CD4-positive, alpha-beta T cell (primary cell): ENCODE measurements at regions of chr18 and their contacts with region 1.

Region 1: DNA sequence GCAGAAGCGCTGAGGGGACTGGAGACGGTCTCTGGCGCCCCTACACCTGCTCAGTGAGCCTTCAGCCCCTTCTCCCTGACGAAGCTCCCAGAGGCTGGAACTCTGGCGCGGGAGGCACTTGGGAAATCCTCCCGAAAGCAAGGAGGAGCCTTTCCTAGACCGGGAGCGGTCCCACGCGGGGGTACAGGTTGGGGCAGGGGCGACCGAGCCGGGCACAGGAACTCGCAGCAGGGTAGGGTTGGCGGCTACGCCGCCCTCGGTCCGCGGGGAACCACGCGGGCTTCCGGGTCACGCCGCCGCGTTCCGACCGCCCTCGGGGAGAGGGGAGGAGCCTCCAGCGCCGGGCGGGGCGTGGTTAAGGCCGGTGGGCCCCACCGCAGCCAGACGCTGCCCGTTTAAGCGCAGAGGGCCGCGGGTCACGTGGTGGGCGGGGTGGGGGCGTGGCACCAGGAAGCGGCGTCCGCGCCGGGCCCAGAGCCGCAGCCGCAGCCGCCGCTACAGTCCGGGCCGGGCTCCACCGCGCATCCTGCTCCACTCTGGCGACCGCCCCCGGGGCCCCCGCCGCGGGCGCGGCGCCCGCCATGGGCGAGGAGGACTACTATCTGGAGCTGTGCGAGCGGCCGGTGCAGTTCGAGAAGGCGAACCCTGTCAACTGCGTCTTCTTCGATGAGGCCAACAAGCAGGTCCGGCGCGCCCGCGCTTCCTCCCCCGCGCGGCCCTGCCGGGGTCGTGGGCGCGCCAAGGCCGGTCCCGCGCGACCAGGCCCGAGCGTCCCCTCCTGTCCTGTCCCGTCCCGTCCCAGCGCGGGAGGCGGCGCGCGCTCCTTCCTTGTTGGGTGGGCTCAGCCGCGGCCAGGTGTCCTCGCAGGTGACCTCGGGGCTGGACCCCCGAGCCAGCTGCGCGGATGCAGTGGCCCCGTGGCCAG is at the start of gene RMC1:
- DNase-seq: peak; percentile 92 to 99 (median 97)
- ATAC-seq: peak; percentile 89
- H3K4me3 ChIP-seq: peak within 1 kb of the TSS; percentile 76
- H3K4me3 Mint-ChIP-seq: peak within 1 kb of the TSS; percentile 91
- H3K27ac ChIP-seq: peak within 1 kb of the TSS; percentile 86 to 89
- H3K27ac Mint-ChIP-seq: peak within 1 kb of the TSS; percentile 91
- H3K4me1 ChIP-seq: peaks cover 45% of the 10 kb centered on the region
- H3K4me1 Mint-ChIP-seq: peaks cover 51% of the 10 kb centered on the region
- H3K27me3 ChIP-seq: no peaks in the 10 kb centered on the region
- H3K27me3 Mint-ChIP-seq: no peaks in the 10 kb centered on the region
- CTCF ChIP-seq: no peak
- total RNA-seq, gene RMC1: 46.9 to 48.3 TPM

Region 2: DNA sequence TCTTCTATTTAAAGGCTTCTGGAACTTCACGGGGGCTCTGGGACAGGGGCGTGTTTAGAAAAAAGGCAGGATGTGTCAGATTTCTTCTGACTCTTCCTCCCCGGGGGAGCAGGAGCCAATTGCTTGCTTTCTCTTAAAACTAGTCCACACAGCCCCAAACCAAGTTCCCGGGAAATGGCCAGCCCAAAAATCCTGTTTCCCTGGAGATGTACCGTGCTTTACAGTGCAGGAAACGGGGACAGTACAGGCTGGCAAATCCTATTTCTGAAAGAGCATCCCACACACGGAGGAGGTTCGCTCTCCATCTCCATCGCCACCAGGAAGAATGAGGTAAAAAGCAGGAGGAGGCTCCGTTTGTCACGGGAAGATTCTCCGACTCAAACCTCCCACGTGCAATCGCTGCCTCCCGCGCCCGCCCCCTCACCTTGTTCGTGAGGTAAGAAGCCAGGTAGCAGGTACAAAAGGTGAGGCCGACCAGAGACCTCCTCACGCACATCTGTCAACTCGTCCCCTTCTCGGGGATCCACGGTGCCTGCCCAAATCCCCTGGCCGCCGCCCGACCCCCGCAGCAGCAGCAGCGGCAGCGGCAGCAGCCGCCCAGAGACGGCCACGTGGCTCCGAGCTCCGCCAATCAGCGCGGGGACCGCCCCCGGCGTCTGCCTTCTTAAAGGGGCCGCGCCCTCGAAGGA is 65.8 kb before region 1 on chr18:
- CTCF ChIA-PET with region 1: no interaction called
- POLR2A ChIA-PET with region 1: no interaction called
- intact Hi-C with region 1: loop called in 1 of 2 experiments (anchors 1 kb)
- DNase-seq: peak; percentile 45 to 81 (median 68)
- ATAC-seq: peak; percentile 98
- H3K4me3 ChIP-seq: peak overlapping the region; percentile 77
- H3K4me3 Mint-ChIP-seq: peak overlapping the region; percentile 89
- H3K27ac ChIP-seq: no peak overlapping the region
- H3K27ac Mint-ChIP-seq: peak overlapping the region; percentile 36
- H3K4me1 ChIP-seq: peaks cover 17% of the 10 kb centered on the region
- H3K4me1 Mint-ChIP-seq: peaks cover 14% of the 10 kb centered on the region
- H3K27me3 ChIP-seq: no peaks in the 10 kb centered on the region
- H3K27me3 Mint-ChIP-seq: no peaks in the 10 kb centered on the region
- CTCF ChIP-seq: no peak

Region 3: GRCh38 chr18:23452728-23453679 is 50.3 kb before region 1 on chr18 and contains the start of gene RIOK3:
- CTCF ChIA-PET with region 1: interaction called, 7 read pairs
- POLR2A ChIA-PET with region 1: interaction called, 12 read pairs
- intact Hi-C with region 1: loop called (anchors 2 to 5 kb)
- DNase-seq: peak; percentile 66 to 94 (median 82)
- ATAC-seq: peak; percentile 88
- H3K4me3 ChIP-seq: peak within 1 kb of the TSS; percentile 88
- H3K4me3 Mint-ChIP-seq: peak within 1 kb of the TSS; percentile 98
- H3K27ac ChIP-seq: peak within 1 kb of the TSS; percentile 80 to 81
- H3K27ac Mint-ChIP-seq: peak within 1 kb of the TSS; percentile 89
- H3K4me1 ChIP-seq: peaks cover 22% of the 10 kb centered on the region
- H3K4me1 Mint-ChIP-seq: peaks cover 53% of the 10 kb centered on the region
- H3K27me3 ChIP-seq: no peaks in the 10 kb centered on the region
- H3K27me3 Mint-ChIP-seq: no peaks in the 10 kb centered on the region
- CTCF ChIP-seq: no peak
- total RNA-seq, gene RIOK3: 151 to 153 TPM

Region 4: DNA sequence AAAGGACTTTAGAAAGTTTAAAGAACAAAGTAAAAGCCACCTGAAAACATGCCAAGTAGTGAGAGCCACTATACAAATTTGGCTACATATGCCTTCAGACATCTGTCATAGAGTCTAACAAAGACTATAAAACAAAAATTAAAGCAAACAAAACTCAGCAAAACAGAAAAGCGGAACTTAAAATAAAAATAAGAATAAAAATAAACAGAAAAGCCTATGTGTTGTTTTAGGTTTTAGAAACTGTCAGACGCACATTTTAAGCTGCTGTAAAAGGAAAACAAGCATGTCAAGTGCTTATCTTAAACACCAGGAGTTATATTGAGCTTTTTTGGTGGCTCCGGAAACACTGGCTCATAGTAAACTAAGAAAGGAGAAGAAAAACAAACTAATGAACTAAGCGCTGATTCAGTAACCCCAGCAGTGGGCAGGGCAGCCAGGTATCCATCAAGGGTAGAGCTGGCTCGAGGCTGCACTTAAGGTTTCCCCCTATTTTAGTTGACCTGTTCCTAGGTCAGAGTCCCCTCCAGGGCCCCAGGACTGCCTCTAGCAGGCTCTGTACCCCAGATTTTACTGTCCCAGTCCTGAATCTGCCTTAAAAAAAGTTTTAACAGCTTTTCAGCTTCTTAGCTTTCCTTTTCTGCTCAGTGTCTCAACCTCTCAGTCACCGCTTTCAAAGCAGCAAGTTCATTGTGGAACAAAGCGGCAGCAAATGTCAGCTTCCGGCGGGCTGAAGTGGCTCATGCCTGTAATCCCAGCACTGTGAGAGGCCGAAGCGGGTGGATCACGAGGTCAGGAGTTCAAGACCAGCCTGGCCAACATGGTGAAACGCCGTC is 15.3 kb before region 1 on chr18:
- CTCF ChIA-PET with region 1: interaction called, 10 read pairs
- POLR2A ChIA-PET with region 1: interaction called, 20 read pairs
- intact Hi-C with region 1: no loop called
- DNase-seq: peak in 12 of 14 experiments; percentile 17 to 65 (median 43)
- ATAC-seq: peak; percentile 69
- H3K4me3 ChIP-seq: peak overlapping the region; percentile 32
- H3K4me3 Mint-ChIP-seq: peak overlapping the region; percentile 83
- H3K27ac ChIP-seq: peak overlapping the region; percentile 46 to 70
- H3K27ac Mint-ChIP-seq: peak overlapping the region; percentile 92
- H3K4me1 ChIP-seq: peaks cover 9% of the 10 kb centered on the region
- H3K4me1 Mint-ChIP-seq: peaks cover 19% of the 10 kb centered on the region
- H3K27me3 ChIP-seq: no peaks in the 10 kb centered on the region
- H3K27me3 Mint-ChIP-seq: no peaks in the 10 kb centered on the region
- CTCF ChIP-seq: no peak

Region 5: DNA sequence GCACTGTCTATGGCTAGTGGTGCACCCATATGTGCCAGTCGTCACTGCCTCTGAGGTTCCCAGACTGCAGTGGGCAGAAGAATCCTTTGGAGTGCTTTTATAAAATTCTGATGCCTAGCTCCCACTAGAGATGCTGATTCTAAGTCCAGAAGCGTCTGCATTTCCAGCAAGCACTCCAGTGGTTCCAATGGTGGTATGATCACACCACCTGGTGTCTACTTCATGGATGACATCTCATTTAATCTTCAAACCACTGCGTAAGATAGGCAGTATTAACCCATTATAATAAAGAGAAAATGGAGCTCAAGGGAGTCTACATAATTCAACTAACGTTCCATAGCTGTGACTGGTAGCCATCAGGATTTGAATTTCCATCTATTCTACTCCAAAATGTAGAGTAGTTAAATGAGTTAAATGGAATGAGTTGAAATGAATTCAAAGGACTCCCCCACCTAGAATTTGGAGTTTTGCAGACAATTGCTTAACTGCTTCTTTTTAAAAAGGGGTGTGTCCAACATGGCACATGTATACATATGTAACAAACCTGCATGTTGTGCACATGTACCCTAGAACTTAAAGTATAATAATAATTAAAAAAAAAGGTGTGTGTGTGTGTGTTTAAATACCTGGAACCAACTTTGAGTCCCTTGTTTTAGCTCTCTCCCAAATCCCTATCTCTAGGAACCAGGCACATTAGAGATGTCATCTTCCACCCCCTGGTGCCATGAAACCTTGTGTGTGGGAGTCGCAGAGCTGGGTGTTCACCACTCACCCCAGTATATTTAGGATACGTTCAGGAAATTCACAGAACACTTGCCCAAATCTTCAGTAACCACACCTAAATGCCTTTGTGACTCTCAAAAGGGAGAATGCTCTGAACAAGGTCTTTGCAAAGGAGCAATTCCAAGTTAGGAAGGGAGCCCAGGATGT is 200.0 kb after region 1 on chr18:
- CTCF ChIA-PET with region 1: interaction called, 4 read pairs
- POLR2A ChIA-PET with region 1: no interaction called
- intact Hi-C with region 1: loop called (anchors 5 kb)
- DNase-seq: peak in 5 of 14 experiments; percentile 12 to 72 (median 61)
- ATAC-seq: peak; percentile 88
- H3K4me3 ChIP-seq: no peak overlapping the region
- H3K4me3 Mint-ChIP-seq: no peak overlapping the region
- H3K27ac ChIP-seq: no peak overlapping the region
- H3K27ac Mint-ChIP-seq: no peak overlapping the region
- H3K4me1 ChIP-seq: no peaks in the 10 kb centered on the region
- H3K4me1 Mint-ChIP-seq: no peaks in the 10 kb centered on the region
- H3K27me3 ChIP-seq: peaks cover 6 to 14% of the 10 kb centered on the region in 2 experiments
- H3K27me3 Mint-ChIP-seq: peaks cover 32% of the 10 kb centered on the region
- CTCF ChIP-seq: peak; percentile 56

Region 6: GRCh38 chr18:23812546-23813440 is 309.5 kb after region 1 on chr18:
- CTCF ChIA-PET with region 1: no interaction called
- POLR2A ChIA-PET with region 1: no interaction called
- intact Hi-C with region 1: loop called in 1 of 2 experiments (anchors 5 kb)
- DNase-seq: peak in 3 of 14 experiments; percentile 47 to 57 (median 49)
- ATAC-seq: peak; percentile 49
- H3K4me3 ChIP-seq: no peak overlapping the region
- H3K4me3 Mint-ChIP-seq: no peak overlapping the region
- H3K27ac ChIP-seq: no peak overlapping the region
- H3K27ac Mint-ChIP-seq: no peak overlapping the region
- H3K4me1 ChIP-seq: peaks cover 9% of the 10 kb centered on the region
- H3K4me1 Mint-ChIP-seq: peaks cover 11% of the 10 kb centered on the region
- H3K27me3 ChIP-seq: no peaks in the 10 kb centered on the region
- H3K27me3 Mint-ChIP-seq: no peaks in the 10 kb centered on the region
- CTCF ChIP-seq: peak; percentile 63